Heart right ventricle (tissue), 16 donors: ENCODE measurements at regions of chr13 and their contacts with region 1.

Region 1: DNA sequence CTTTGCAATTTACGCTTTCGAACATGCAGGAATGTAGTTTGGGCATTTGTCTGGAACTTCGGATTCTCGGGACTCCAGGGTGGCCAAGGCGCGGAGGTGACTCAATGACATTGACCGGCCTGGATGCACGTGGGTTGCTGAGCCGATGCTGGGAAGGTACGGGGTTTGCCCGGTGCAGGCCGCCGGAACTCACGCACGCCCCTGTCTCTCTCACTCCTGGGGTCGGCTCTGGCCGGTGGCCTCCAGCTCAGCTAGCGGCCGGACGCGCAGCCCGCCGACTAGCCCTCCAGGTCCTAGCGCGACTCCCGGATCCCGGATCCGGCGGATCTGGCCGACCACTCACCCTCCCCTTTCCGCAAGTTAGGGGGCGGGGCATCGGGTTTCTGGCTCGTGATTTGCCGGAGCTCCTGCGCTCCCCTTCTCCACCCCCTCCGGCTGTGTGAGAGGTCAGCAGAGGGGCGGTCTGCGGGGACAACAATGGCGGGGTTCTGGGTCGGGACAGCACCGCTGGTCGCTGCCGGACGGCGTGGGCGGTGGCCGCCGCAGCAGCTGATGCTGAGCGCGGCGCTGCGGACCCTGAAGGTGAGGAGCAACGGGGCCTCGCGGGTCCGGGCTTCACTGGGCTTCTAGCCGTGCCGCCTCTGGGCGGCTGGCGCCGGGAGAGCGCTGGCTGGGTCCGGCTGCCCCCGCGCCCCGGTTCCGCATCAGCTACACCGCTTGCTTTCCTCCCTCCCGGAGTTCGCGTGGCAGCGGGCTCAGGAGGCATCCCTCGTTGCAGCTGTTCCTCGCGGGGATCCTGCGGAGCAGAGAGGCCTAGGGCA is at the start of gene PCCA:
- DNase-seq: peak; percentile 96 to 98
- ATAC-seq: peak; percentile 99 to 100 (median 100)
- H3K4me3 ChIP-seq: peak within 1 kb of the TSS; percentile 64 to 99 (median 93)
- H3K27ac ChIP-seq: peak within 1 kb of the TSS; percentile 39 to 90 (median 80)
- H3K4me1 ChIP-seq: peaks cover 0 to 36% (median 17%) of the 10 kb centered on the region in 9 donors
- H3K27me3 ChIP-seq: no peaks in the 10 kb centered on the region
- CTCF ChIP-seq: peak in 1 of 9 donors; percentile 7
- total RNA-seq, gene PCCA: 46.2 to 71.9 (median 65.1) TPM

Region 2: GRCh38 chr13:98853771-98854221 is 1235.1 kb before region 1 on chr13:
- intact Hi-C with region 1: no loop called
- DNase-seq: no peak
- ATAC-seq: peak in 2 of 8 donors; percentile 18 to 22
- H3K4me3 ChIP-seq: no peak overlapping the region
- H3K27ac ChIP-seq: no peak overlapping the region
- H3K4me1 ChIP-seq: no peaks in the 10 kb centered on the region
- H3K27me3 ChIP-seq: no peaks in the 10 kb centered on the region
- CTCF ChIP-seq: no peak

Region 3: GRCh38 chr13:100129605-100130004 is 40.8 kb after region 1 on chr13:
- intact Hi-C with region 1: loop called in 1 of 10 experiments (anchors 5 kb)
- DNase-seq: no peak
- ATAC-seq: peak in 6 of 8 donors; percentile 30 to 49 (median 42)
- H3K4me3 ChIP-seq: no peak overlapping the region
- H3K27ac ChIP-seq: peak overlapping the region in 1 of 10 donors; percentile 32
- H3K4me1 ChIP-seq: peaks cover 0 to 26% (median 12%) of the 10 kb centered on the region in 9 donors
- H3K27me3 ChIP-seq: no peaks in the 10 kb centered on the region
- CTCF ChIP-seq: no peak

Region 4: GRCh38 chr13:100139817-100140216 is 51.0 kb after region 1 on chr13:
- intact Hi-C with region 1: loop called in 1 of 10 experiments (anchors 10 kb)
- DNase-seq: no peak
- ATAC-seq: no peak
- H3K4me3 ChIP-seq: no peak overlapping the region
- H3K27ac ChIP-seq: no peak overlapping the region
- H3K4me1 ChIP-seq: peaks cover 0 to 9% (median 0%) of the 10 kb centered on the region in 9 donors
- H3K27me3 ChIP-seq: no peaks in the 10 kb centered on the region
- CTCF ChIP-seq: no peak

Region 5: DNA sequence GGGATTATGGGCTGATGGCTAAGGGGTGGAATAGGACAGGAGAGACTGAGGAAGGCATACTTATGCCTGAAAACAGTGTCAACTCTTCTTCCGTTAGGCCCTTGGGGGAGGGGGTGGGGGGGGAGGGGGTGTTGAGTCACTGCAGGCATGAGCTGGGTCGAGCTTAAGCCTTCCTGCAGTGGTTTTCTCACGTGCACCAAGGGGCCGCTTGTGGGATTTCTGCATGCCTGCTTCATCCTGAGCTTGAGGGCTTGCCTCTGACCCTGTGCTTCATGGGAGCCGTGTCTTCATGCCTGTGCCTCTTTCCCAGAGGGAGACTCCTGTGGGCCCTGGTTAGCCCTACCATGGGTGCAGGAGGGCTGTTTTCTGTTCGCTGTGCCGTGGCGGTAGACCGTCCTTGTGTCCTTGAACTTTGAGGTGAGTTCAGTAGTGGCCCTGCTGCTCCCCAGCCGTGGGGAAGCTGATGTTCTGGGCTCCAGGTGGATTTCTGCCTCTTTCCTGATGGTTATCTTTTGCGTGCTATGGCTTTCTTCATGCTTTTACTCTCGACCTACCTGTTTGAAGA is 186.2 kb after region 1 on chr13:
- intact Hi-C with region 1: no loop called
- DNase-seq: no peak
- ATAC-seq: no peak
- H3K4me3 ChIP-seq: no peak overlapping the region
- H3K27ac ChIP-seq: no peak overlapping the region
- H3K4me1 ChIP-seq: peaks cover 0 to 3% (median 1%) of the 10 kb centered on the region in 9 donors
- H3K27me3 ChIP-seq: no peaks in the 10 kb centered on the region
- CTCF ChIP-seq: no peak

Region 6: DNA sequence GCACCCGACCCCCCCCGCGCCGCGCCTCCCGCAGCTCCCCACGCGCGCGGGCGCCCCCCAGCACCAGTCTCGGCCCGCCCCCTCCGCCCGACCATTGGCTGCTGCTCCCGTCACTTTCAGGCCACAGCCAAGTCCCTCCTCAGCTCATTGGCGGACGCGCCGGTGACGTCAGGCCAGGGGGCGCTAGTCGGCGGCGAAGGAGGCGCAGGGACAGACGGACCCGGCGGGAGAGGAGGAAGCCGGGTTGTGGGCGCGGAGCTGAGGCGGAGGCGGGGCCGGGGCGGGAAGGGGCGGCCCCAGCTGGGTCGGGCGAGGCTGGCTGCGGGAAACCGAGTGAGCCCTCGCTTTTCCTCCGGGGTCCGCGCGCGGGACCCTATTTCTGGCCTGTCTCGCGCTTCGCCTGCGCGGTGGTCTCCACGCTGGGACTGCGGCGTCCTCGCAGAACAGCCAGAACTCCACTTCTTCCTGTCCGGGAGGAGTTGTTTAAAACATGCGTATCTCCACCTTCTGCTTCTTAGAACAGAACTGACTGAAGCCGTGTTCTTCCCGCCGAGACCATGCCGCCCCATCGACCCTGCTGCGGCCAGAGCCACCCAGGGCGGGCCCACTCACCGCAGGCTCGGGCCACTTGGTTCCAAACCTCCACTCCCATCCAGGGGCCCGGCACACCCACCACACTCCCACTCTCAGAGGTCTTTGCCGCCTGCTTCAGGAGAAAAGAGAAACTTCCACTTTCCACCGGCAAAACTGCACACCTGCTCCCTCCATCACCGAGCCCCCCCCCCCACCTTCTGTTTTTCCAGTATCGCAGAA is 586.2 kb after region 1 on chr13:
- intact Hi-C with region 1: loop called in 1 of 10 experiments (anchors 10 kb)
- DNase-seq: peak; percentile 100
- ATAC-seq: peak; percentile 97 to 99 (median 98)
- H3K4me3 ChIP-seq: peak overlapping the region; percentile 29 to 100 (median 79)
- H3K27ac ChIP-seq: peak overlapping the region; percentile 80 to 93 (median 88)
- H3K4me1 ChIP-seq: peaks cover 0 to 22% (median 11%) of the 10 kb centered on the region in 9 donors
- H3K27me3 ChIP-seq: peaks cover 0 to 9% (median 0%) of the 10 kb centered on the region in 7 donors
- CTCF ChIP-seq: peak in 7 of 9 donors; percentile 15 to 65 (median 44)